SK-N-SH (cell line): ENCODE measurements at regions of chr10 and their contacts with region 1.

Region 1: GRCh38 chr10:125048101-125048864 is 106.4 kb downstream of the ZRANB1 start:
- DNase-seq: peak; percentile 88
- H3K4me3 ChIP-seq: peak overlapping the region in 1 of 2 experiments; percentile 38; a peak in 1 of 4 replicates
- H3K27ac ChIP-seq: peak overlapping the region in 1 of 2 experiments; percentile 80; a peak in 2 of 4 replicates
- H3K4me1 ChIP-seq: peaks cover 24 to 47% of the 10 kb centered on the region in 2 experiments; a peak in 2 of 4 replicates
- H3K27me3 ChIP-seq: no peaks in the 10 kb centered on the region
- CTCF ChIP-seq: peak; percentile 97
- EP300 ChIP-seq: no peak
- RAD21 ChIP-seq: peak; percentile 86

Region 2: GRCh38 chr10:125000366-125001312 is 47.6 kb before region 1 on chr10:
- CTCF ChIA-PET with region 1: interaction called, 30 read pairs
- POLR2A ChIA-PET with region 1: no interaction called
- DNase-seq: peak; percentile 83
- H3K4me3 ChIP-seq: no peak overlapping the region
- H3K27ac ChIP-seq: peak overlapping the region; percentile 9 to 94; a peak in 3 of 4 replicates
- H3K4me1 ChIP-seq: peaks cover 0 to 73% of the 10 kb centered on the region in 2 experiments; a peak in 1 of 4 replicates
- H3K27me3 ChIP-seq: no peaks in the 10 kb centered on the region
- CTCF ChIP-seq: no peak
- EP300 ChIP-seq: peak in 1 of 2 experiments; percentile 19; a peak in 1 of 4 replicates
- RAD21 ChIP-seq: peak; percentile 56

Region 3: DNA sequence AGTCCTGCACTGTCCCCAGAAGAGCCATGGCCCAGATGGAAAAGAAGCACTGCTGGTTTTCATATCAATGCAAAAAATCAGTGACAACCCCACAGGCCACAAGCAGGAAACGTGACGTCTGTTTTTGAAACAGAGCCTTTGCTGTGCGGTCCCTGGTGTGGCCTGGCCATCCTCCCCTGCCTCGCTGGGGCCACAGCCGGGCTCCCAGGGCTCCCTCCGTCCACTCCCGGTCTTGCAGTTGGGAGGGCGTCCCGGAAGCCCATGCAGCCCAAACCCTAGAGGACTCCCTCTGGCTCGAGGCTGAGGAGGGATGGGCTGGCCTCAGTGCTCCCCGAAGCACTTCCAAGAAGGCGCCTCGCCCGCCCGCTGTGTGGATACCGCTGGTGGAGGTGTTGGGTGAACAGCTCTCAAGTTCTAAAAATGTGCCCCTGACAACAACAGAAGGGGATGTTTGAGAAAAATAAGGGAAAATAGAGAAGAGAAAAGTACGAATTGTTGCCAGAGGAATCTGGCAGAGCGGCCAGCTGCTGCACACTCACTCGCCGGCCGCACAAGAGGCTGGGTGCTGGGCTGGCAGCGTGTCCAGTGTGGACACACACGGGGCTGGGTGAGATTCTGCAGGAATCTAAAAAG is 32.9 kb before region 1 on chr10:
- CTCF ChIA-PET with region 1: interaction called, 18 read pairs
- POLR2A ChIA-PET with region 1: no interaction called
- DNase-seq: peak; percentile 88
- H3K4me3 ChIP-seq: no peak overlapping the region
- H3K27ac ChIP-seq: peak overlapping the region in 1 of 2 experiments; percentile 97; a peak in 2 of 4 replicates
- H3K4me1 ChIP-seq: peaks cover 6 to 80% of the 10 kb centered on the region in 2 experiments; a peak in 2 of 4 replicates
- H3K27me3 ChIP-seq: no peaks in the 10 kb centered on the region
- CTCF ChIP-seq: no peak
- EP300 ChIP-seq: peak in 1 of 2 experiments; percentile 86; a peak in 2 of 4 replicates
- RAD21 ChIP-seq: peak; percentile 40; the same call in 1 of the 2 replicates

Region 4: GRCh38 chr10:125030567-125031197 is 17.6 kb before region 1 on chr10:
- CTCF ChIA-PET with region 1: interaction called, 70 read pairs
- POLR2A ChIA-PET with region 1: no interaction called
- DNase-seq: no peak
- H3K4me3 ChIP-seq: no peak overlapping the region
- H3K27ac ChIP-seq: no peak overlapping the region; a peak in 1 of 4 replicates
- H3K4me1 ChIP-seq: peaks cover 20 to 81% of the 10 kb centered on the region in 2 experiments
- H3K27me3 ChIP-seq: no peaks in the 10 kb centered on the region
- CTCF ChIP-seq: no peak
- EP300 ChIP-seq: no peak
- RAD21 ChIP-seq: no peak